ENCODE measurements at regions of chr11 and their contacts with region 1.

Region 1: DNA sequence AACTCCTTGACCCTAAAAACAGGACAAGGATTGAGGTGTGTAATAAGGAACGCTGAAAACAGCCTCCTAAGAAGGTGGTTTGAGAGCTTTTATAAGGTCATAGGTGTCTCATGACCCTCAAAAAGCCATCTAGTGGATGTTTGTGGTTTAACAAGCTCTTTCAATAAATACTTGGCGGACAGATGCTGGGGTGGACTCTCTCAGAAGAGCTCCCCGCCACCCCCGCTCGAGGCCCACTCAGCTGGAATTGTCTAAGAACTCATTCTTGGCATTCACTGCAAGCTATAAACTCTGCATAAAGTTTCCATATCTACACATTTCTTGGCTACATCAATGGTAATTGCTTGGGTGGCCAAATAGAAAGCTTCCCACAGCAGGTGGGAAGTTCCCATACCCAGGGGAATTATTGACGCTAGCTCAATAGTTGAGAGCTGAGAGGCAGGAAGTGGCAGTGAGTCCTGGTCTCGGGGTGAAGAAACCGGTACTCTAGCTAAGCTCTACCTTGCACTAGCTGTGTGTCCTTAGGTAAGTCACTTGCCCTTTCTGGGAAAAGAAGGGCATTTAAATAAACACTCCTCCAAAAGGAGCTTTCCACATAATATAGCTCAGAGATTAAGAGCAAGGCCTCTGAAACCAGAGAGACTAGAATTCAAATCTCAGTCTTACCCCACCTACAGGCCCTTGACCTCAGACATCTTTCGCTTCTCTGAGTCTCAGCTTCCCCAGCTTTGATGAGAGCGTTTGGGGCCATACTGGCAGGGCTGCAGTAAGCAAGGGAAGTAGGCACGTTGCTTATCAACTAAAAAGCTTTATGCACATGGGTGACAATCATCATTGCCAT is 6.4 kb downstream of the MS4A15 start:
- DNase-seq: no peak
- ATAC-seq: peak; percentile 39
- H3K4me3 Mint-ChIP-seq: no peak overlapping the region
- H3K27ac Mint-ChIP-seq: no peak overlapping the region
- H3K4me1 Mint-ChIP-seq: no peaks in the 10 kb centered on the region
- H3K27me3 Mint-ChIP-seq: peaks cover 27% of the 10 kb centered on the region
- CTCF ChIP-seq: no peak

Region 2: GRCh38 chr11:60821827-60822599 is 58.9 kb after region 1 on chr11:
- CTCF ChIA-PET with region 1: no interaction called
- POLR2A ChIA-PET with region 1: no interaction called
- intact Hi-C with region 1: loop called (anchors 10 kb)
- DNase-seq: no peak
- ATAC-seq: peak; percentile 27
- H3K4me3 Mint-ChIP-seq: no peak overlapping the region
- H3K27ac Mint-ChIP-seq: no peak overlapping the region
- H3K4me1 Mint-ChIP-seq: no peaks in the 10 kb centered on the region
- H3K27me3 Mint-ChIP-seq: no peaks in the 10 kb centered on the region
- CTCF ChIP-seq: no peak